ENCODE measurements at regions of chr18 and their contacts with region 1.

Region 1: GRCh38 chr18:53534695-53535094 is 689.8 kb downstream of the MBD2 start:
- DNase-seq: peak in 7 of 10 donors; percentile 33 to 75 (median 48)
- H3K4me3 ChIP-seq: peak overlapping the region in 2 of 59 donors; percentile 4 to 16
- H3K27ac ChIP-seq: peak overlapping the region in 57 of 59 donors; percentile 40 to 93 (median 82)
- H3K27me3 ChIP-seq: no peaks in the 10 kb centered on the region
- CTCF ChIP-seq: peak in 2 of 56 donors; percentile 11 to 19

Region 2: DNA sequence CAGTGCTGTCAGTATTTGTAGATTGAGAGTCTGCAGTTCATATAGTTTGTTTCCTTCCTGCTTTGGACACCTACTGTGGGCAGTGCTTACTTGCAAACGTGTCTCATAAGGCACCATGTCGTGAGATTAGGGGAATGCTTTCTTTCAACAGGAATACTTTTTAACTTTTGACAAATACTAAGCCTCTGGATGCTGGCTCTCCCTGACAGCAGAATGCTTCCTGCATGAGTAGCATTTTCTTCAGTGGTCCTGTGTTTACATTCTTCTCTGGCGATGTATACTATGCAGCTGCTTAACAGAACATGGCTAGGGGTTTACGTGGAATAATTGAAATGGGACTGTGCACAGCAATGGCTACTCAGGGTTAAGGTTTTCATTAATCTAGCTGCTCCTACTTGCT is 117.7 kb before region 1 on chr18:
- intact Hi-C with region 1: loop called in 1 of 2 experiments (anchors 2 kb)
- DNase-seq: no peak
- H3K4me3 ChIP-seq: no peak overlapping the region
- H3K27ac ChIP-seq: no peak overlapping the region
- H3K27me3 ChIP-seq: no peaks in the 10 kb centered on the region
- CTCF ChIP-seq: no peak